GM12878 (cell line): ENCODE measurements at regions of chr16 and their contacts with region 1.

Region 1: DNA sequence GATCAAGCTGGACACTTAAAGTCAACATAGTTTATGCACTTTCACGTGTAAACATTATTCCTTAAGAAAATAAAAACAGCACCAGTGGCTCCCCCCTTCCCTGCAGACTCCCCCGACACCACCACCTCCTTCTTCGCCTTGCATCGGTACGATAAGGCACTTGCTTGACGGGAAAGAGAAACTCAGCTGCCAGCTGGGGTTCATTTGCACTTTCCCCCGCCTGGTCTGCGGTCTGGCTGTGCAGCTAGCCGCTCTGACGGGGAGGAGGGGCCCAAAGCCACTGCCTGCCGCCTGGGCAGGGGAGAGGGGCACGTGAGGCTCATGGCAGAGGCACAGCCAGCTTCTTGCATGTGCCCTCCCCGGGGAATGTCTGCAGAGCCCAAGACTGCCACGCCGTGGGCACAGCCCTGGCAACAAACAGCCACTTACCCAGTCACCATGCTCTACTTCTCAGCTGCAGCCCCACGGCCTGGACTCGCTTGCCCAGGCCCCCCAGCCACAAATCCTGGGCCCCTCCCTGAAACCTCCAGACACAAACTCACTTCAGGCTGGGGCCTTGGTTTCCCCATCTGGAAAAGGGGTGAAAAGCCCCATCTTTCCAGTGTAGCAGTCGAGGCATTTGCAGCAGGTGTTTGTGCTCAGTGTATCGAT is 16.5 kb upstream of the PRM1 start:
- DNase-seq: peak; percentile 92
- ATAC-seq: peak; percentile 91
- H3K4me3 ChIP-seq: peak overlapping the region; percentile 30; the same call in 1 of the 2 replicates
- H3K27ac ChIP-seq: peak overlapping the region; percentile 91
- H3K4me1 ChIP-seq: peaks cover 57% of the 10 kb centered on the region
- H3K27me3 ChIP-seq: no peaks in the 10 kb centered on the region
- CTCF ChIP-seq: peak in 1 of 3 experiments; percentile 26; a peak in 2 of 6 replicates
- EP300 ChIP-seq: peak; percentile 86 to 94
- POLR2A ChIP-seq: peak; percentile 58
- RAD21 ChIP-seq: 0 out of 2 replicates have a peak, but pooled peaks have one; percentile 13

Region 2: DNA sequence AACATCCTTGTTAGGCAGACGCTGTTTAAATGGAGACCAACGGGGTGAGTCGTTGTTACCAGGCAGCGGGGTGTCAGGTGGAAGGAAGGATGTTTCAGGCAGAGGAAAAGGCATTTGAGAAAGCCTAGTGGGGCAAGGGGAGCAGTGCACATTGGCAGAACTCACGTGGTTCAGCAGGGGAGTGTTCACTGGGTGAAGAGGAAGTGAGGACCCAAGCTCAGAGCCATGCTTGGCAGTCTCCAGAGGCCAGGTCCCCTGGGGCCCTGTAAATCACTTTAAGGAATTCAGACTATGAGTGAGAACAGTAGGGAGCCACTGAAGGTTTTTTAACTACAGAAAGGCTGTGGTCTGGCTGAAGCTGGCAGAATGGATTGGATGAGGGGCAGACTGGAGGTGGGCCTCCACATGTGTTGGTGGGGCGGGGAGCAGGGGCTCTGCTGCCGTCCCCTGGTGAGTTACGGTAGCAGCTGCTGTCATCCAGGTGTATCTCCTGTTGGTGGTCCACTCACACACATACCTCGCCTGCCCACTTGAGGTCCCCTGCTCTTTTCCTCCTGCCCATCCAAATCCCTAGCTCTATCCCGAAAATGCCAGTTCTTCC is 348.1 kb before region 1 on chr16:
- CTCF ChIA-PET with region 1: interaction called, 5 read pairs
- POLR2A ChIA-PET with region 1: interaction called, 4 read pairs
- RAD21 ChIA-PET with region 1: interaction called, 15 read pairs
- SMC1A ChIA-PET with region 1: interaction called, 9 read pairs
- in situ Hi-C with region 1: no loop called
- intact Hi-C with region 1: no loop called
- DNase-seq: peak; percentile 91
- ATAC-seq: peak; percentile 83
- H3K4me3 ChIP-seq: peak overlapping the region; percentile 28; the same call in 1 of the 2 replicates
- H3K27ac ChIP-seq: peak overlapping the region; percentile 62
- H3K4me1 ChIP-seq: peaks cover 27% of the 10 kb centered on the region
- H3K27me3 ChIP-seq: no peaks in the 10 kb centered on the region
- CTCF ChIP-seq: peak; percentile 34 to 55 (median 49); a peak in 2 of 6 replicates
- EP300 ChIP-seq: peak; percentile 9 to 33; a peak in 1 of 4 replicates
- POLR2A ChIP-seq: no peak
- RAD21 ChIP-seq: no peak

Region 3: GRCh38 chr16:11105038-11105903 is 192.3 kb before region 1 on chr16:
- CTCF ChIA-PET with region 1: interaction called, 4 read pairs
- POLR2A ChIA-PET with region 1: no interaction called
- RAD21 ChIA-PET with region 1: interaction called, 4 read pairs
- SMC1A ChIA-PET with region 1: interaction called, 10 read pairs
- in situ Hi-C with region 1: no loop called
- intact Hi-C with region 1: no loop called
- DNase-seq: peak; percentile 86
- ATAC-seq: peak; percentile 85
- H3K4me3 ChIP-seq: 0 out of 2 replicates have a peak overlapping the region, but pooled peaks have one; percentile 31
- H3K27ac ChIP-seq: peak overlapping the region; percentile 87
- H3K4me1 ChIP-seq: peaks cover 38% of the 10 kb centered on the region
- H3K27me3 ChIP-seq: no peaks in the 10 kb centered on the region
- CTCF ChIP-seq: no peak
- EP300 ChIP-seq: peak in 1 of 2 experiments; percentile 46; a peak in 1 of 4 replicates
- POLR2A ChIP-seq: peak; percentile 69
- RAD21 ChIP-seq: no peak

Region 4: DNA sequence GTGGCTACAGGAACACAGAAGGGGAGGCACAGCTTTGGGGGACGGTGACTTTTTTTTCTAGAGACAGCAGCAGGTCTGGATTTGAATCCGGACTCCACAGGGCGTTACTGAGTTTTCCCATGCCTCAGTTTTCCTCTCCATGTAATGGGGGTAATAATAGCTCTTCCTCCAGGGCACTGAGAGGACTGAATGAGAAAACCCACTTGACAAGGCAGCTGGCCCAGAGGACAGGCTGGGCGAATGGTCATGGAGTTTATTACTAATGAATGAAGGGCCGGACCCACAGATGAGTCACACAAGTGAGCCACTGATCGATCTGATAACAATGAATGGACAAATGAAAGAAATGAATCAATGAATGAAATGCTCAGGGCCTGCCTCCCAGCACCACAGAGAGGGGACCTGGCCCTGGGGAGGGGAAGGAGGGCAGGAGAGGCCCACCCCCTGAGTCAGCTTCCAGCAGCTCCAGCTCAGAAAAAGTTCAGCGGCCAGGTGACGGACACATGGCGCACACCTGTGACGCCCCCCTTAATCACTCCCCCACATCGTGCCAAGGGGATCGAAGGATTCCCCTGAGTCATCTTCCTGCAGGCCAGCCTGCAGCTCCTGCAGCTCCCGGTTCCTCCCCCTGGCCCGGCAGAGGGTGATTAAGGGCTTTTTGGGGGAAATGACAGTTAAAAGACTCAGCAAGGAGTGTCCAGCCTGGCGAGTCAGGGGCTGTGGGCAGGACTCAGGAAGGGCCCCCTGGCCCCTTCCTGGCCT is 95.9 kb before region 1 on chr16:
- CTCF ChIA-PET with region 1: interaction called, 3 read pairs
- POLR2A ChIA-PET with region 1: no interaction called
- RAD21 ChIA-PET with region 1: interaction called, 5 read pairs
- SMC1A ChIA-PET with region 1: interaction called, 3 read pairs
- in situ Hi-C with region 1: no loop called
- intact Hi-C with region 1: loop called (anchors 5 kb)
- DNase-seq: no peak
- ATAC-seq: peak; percentile 5
- H3K4me3 ChIP-seq: no peak overlapping the region
- H3K27ac ChIP-seq: peak overlapping the region; percentile 45
- H3K4me1 ChIP-seq: peaks cover 67% of the 10 kb centered on the region
- H3K27me3 ChIP-seq: no peaks in the 10 kb centered on the region
- CTCF ChIP-seq: no peak
- EP300 ChIP-seq: peak in 1 of 2 experiments; percentile 28; a peak in 1 of 4 replicates
- POLR2A ChIP-seq: no peak
- RAD21 ChIP-seq: no peak

Region 5: GRCh38 chr16:11263737-11264136 is 33.9 kb before region 1 on chr16:
- CTCF ChIA-PET with region 1: interaction called, 104 read pairs
- POLR2A ChIA-PET with region 1: interaction called, 80 read pairs
- RAD21 ChIA-PET with region 1: interaction called, 123 read pairs
- SMC1A ChIA-PET with region 1: interaction called, 108 read pairs
- in situ Hi-C with region 1: no loop called
- intact Hi-C with region 1: no loop called
- DNase-seq: no peak
- ATAC-seq: peak; percentile 69
- H3K4me3 ChIP-seq: no peak overlapping the region
- H3K27ac ChIP-seq: peak overlapping the region; percentile 45
- H3K4me1 ChIP-seq: peaks cover 25% of the 10 kb centered on the region
- H3K27me3 ChIP-seq: no peaks in the 10 kb centered on the region
- CTCF ChIP-seq: no peak
- EP300 ChIP-seq: 0 out of 4 replicates have a peak, but pooled peaks of 1 of the 2 experiments have one; percentile 8
- POLR2A ChIP-seq: no peak
- RAD21 ChIP-seq: no peak

Region 6: GRCh38 chr16:11312718-11313492 is 15.3 kb after region 1 on chr16:
- CTCF ChIA-PET with region 1: interaction called, 64 read pairs
- POLR2A ChIA-PET with region 1: interaction called, 85 read pairs
- RAD21 ChIA-PET with region 1: interaction called, 206 read pairs
- SMC1A ChIA-PET with region 1: interaction called, 194 read pairs
- in situ Hi-C with region 1: no loop called
- intact Hi-C with region 1: loop called (anchors 1 kb)
- DNase-seq: no peak
- ATAC-seq: no peak
- H3K4me3 ChIP-seq: no peak overlapping the region
- H3K27ac ChIP-seq: no peak overlapping the region; the same call in 1 of the 2 replicates
- H3K4me1 ChIP-seq: peaks cover 57% of the 10 kb centered on the region
- H3K27me3 ChIP-seq: no peaks in the 10 kb centered on the region; a peak in 1 of 4 replicates
- CTCF ChIP-seq: no peak
- EP300 ChIP-seq: no peak
- POLR2A ChIP-seq: no peak
- RAD21 ChIP-seq: no peak

Region 7: GRCh38 chr16:11370084-11370931 is 72.7 kb after region 1 on chr16:
- CTCF ChIA-PET with region 1: interaction called, 15 read pairs
- POLR2A ChIA-PET with region 1: interaction called, 10 read pairs
- RAD21 ChIA-PET with region 1: interaction called, 18 read pairs
- SMC1A ChIA-PET with region 1: interaction called, 23 read pairs
- in situ Hi-C with region 1: no loop called
- intact Hi-C with region 1: no loop called
- DNase-seq: peak; percentile 57
- ATAC-seq: peak; percentile 93
- H3K4me3 ChIP-seq: no peak overlapping the region
- H3K27ac ChIP-seq: no peak overlapping the region
- H3K4me1 ChIP-seq: peaks cover 15% of the 10 kb centered on the region
- H3K27me3 ChIP-seq: no peaks in the 10 kb centered on the region
- CTCF ChIP-seq: no peak
- EP300 ChIP-seq: no peak
- POLR2A ChIP-seq: no peak
- RAD21 ChIP-seq: no peak

Region 8: DNA sequence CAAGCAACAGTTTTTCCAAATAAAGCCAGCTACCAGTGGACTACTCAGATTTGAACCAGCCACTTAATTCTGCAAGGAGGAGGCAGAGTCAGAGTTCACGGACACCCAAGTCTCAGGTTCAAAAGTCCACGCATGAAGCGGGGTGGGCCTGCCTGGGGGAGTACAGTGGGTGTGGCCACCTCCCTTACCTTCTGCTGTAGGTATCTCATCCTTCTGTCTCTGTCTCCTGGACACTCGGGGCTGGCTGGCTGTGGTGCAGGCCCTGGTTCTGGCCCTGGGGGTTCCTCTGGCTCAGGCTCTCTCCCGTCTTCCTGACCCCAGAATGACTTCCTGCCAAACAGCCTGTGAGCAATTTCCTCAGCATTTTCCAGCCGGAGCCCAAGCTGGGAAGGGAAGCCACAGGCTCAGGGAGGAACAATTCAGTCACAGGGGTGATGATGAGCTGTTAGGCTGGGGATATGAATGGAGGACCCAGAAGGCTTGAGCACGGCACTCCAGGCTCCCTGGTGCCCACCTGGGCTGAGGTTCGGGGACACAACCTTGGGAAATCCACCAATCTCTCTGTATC is 187.2 kb after region 1 on chr16:
- CTCF ChIA-PET with region 1: no interaction called
- POLR2A ChIA-PET with region 1: no interaction called
- RAD21 ChIA-PET with region 1: no interaction called
- SMC1A ChIA-PET with region 1: no interaction called
- in situ Hi-C with region 1: no loop called
- intact Hi-C with region 1: no loop called
- DNase-seq: no peak
- ATAC-seq: no peak
- H3K4me3 ChIP-seq: no peak overlapping the region
- H3K27ac ChIP-seq: no peak overlapping the region
- H3K4me1 ChIP-seq: no peaks in the 10 kb centered on the region
- H3K27me3 ChIP-seq: no peaks in the 10 kb centered on the region
- CTCF ChIP-seq: no peak
- EP300 ChIP-seq: no peak
- POLR2A ChIP-seq: no peak
- RAD21 ChIP-seq: no peak